Activated CD4-positive, alpha-beta T cell treated with anti-CD3 and anti-CD28 coated beads for 36 hours (primary cell): ENCODE measurements at regions of chr6 and their contacts with region 1.

Region 1: DNA sequence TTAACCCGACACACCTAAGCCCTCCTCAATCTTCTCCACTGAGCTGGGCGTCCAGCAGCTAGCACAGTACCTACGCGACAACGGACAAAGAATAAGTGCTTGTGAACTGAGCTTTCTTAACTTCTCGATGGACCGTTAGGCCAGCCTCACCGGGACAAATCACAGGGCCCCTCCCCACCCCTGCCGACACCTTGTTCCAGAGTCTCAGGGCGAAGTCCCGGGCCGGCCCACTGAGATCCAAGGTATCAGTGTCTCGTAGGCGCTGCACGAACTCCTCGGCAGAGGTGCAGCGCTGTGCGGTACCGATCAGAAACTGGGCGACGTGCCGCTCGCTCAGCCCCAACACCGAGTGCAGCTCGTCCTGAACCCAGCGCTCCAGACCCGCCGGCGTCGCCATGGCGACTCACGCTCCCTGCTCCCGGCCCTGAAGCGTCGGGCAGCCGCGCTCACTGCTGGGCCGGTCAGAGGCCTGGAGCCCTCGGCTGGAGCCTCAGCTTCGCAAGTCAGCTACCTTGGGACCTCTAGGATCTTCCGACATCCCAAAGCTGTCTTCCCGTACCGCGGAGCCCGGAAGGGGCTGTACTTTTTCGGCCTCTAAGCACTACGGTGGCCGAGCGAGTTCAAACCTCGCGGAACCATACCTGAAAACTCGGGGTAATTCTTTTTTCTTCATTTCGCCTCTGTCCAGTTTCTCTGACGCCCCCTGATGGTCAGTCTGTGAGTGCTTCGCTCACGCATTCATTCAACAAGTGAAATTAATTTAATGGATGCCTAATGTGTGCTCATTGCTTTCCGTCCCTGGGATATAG is at the start of gene DHX16:
- DNase-seq: peak; percentile 93
- ATAC-seq: peak; percentile 83
- H3K4me3 Mint-ChIP-seq: peak within 1 kb of the TSS; percentile 82
- H3K27ac Mint-ChIP-seq: peak within 1 kb of the TSS; percentile 83
- H3K4me1 Mint-ChIP-seq: peaks cover 27% of the 10 kb centered on the region
- H3K27me3 Mint-ChIP-seq: no peaks in the 10 kb centered on the region
- total RNA-seq, gene DHX16: 34.5 to 36.7 TPM

Region 2: DNA sequence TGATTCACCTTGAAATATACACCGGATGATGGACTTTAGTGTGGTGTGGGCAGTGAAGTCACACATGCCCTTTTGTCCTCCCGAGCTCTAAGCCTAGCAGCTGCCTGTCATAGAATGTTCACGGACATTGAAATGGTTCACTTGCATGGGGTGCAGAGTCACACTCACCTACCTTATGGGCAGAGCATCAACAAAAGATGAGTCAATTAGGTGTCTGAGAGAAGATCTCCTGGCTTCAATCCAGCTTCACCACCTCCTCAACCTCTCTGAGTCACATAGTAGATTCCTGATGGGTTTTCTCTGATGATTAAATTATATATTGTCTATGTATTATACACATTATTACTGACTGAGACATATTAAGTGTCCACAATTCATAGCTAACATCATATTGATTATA is 231.5 kb before region 1 on chr6:
- CTCF ChIA-PET with region 1: no interaction called
- POLR2A ChIA-PET with region 1: no interaction called
- intact Hi-C with region 1: no loop called
- DNase-seq: peak; percentile 31
- ATAC-seq: peak; percentile 74
- H3K4me3 Mint-ChIP-seq: no peak overlapping the region
- H3K27ac Mint-ChIP-seq: no peak overlapping the region
- H3K4me1 Mint-ChIP-seq: peaks cover 12% of the 10 kb centered on the region
- H3K27me3 Mint-ChIP-seq: peaks cover 69% of the 10 kb centered on the region

Region 3: GRCh38 chr6:30626484-30627366 is 45.9 kb before region 1 on chr6 and contains the start of gene ATAT1:
- CTCF ChIA-PET with region 1: interaction called, 8 read pairs
- POLR2A ChIA-PET with region 1: no interaction called
- intact Hi-C with region 1: loop called (anchors 1 to 2 kb)
- DNase-seq: peak; percentile 91
- ATAC-seq: peak; percentile 98
- H3K4me3 Mint-ChIP-seq: peak within 1 kb of the TSS; percentile 93
- H3K27ac Mint-ChIP-seq: peak within 1 kb of the TSS; percentile 96
- H3K4me1 Mint-ChIP-seq: peaks cover 21% of the 10 kb centered on the region
- H3K27me3 Mint-ChIP-seq: no peaks in the 10 kb centered on the region
- total RNA-seq, gene ATAT1: 7.1 to 9.2 TPM